WTC11 (cell line): ENCODE measurements at regions of chr10 and their contacts with region 1.

Region 1: DNA sequence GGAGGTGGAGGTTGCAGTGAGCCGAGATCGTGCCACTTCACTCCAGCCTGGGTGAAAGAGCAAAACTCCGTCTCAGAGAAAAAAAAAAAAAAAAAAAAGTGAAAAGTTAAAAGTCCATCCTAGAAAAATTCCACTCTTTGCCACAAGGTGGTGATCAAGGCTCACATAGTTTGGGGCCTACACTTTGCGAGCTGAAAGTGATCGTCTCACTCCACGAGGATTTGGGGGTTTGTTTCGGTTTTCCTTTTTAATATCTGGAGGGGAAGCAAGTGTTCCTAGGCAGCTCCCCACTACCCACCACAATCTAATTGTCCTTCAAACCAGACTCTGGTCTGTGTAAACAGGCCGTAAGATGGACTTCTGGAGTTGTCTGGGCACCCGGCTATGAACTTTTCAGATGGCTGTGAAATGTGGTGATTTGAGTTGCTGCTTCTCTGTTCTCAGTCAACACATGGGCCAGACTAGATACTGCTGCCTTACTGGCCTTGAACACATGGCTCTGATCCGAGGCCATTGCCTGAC is 27.1 kb downstream of the PRLHR start:
- DNase-seq: peak; percentile 17
- ATAC-seq: peak; percentile 34; the same call in 1 of the 2 replicates
- H3K4me3 Mint-ChIP-seq: no peak overlapping the region
- H3K27ac Mint-ChIP-seq: no peak overlapping the region
- H3K4me1 Mint-ChIP-seq: peaks cover 4% of the 10 kb centered on the region
- H3K27me3 Mint-ChIP-seq: peaks cover 3% of the 10 kb centered on the region; the same call in 1 of the 2 replicates
- CTCF ChIP-seq: peak; percentile 79

Region 2: DNA sequence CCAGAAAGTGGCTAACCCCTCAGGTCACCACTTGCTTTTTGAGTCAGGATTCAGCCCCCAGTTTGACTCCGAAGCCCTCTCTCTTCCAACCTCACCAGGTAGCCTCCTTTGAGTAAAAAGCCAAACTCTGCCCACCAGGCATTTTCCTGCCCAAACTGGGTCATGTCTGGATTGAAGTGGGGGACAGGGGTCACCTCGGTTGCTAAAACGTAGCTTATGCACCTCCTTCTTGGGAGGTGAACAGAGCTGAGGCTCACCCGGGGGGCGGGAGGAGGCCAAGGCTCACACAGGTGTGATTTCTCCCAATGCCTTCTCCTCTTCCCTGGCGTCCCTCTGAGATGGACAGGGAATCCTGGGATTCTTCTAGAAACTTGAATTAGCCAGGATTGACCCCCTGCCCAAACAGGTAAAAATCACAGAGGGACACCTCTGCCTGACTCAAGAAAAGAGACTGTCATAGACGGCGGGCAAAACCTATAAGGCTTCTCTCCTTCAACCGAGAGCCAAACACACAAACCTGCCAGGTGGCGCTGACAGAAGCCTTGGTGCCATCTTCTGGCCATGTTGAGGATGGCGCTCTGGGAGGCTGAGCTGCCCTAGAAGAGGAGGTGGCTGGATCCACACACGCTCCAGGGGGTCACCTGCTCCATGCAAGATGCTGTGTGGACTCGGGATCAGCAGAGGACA is 24.5 kb before region 1 on chr10:
- CTCF ChIA-PET with region 1: interaction called, 18 read pairs
- POLR2A ChIA-PET with region 1: no interaction called
- DNase-seq: peak; percentile 81
- ATAC-seq: peak; percentile 99
- H3K4me3 Mint-ChIP-seq: no peak overlapping the region
- H3K27ac Mint-ChIP-seq: no peak overlapping the region
- H3K4me1 Mint-ChIP-seq: no peaks in the 10 kb centered on the region
- H3K27me3 Mint-ChIP-seq: no peaks in the 10 kb centered on the region; the same call in 1 of the 2 replicates
- CTCF ChIP-seq: peak; percentile 24; the same call in 1 of the 2 replicates

Region 3: DNA sequence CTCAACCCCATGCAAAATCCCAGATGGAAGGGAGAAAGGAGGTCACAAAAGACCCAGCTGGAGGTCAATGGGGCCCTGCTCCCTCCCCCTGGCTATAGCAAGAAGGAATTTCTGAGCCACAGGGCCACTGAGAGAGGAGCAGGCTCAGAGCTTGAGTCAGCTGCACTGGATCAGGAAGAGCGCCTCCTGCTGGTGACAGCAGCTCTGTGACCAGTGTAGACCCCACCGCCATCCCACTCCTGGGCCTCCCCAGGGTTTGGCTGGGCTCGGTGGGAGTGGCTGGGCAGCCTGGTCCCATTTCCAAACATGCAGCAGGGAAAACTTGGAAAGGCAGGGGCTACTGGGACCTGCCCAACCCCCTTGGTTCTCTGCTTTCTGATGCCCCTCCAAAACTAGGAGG is 58.6 kb after region 1 on chr10:
- CTCF ChIA-PET with region 1: interaction called, 18 read pairs
- POLR2A ChIA-PET with region 1: no interaction called
- DNase-seq: peak; percentile 40
- ATAC-seq: peak; percentile 93
- H3K4me3 Mint-ChIP-seq: no peak overlapping the region
- H3K27ac Mint-ChIP-seq: no peak overlapping the region
- H3K4me1 Mint-ChIP-seq: peaks cover 25% of the 10 kb centered on the region
- H3K27me3 Mint-ChIP-seq: peaks cover 12% of the 10 kb centered on the region
- CTCF ChIP-seq: peak; percentile 57; the same call in 1 of the 2 replicates

Region 4: GRCh38 chr10:118669020-118669791 is 100.8 kb after region 1 on chr10:
- CTCF ChIA-PET with region 1: interaction called, 23 read pairs
- POLR2A ChIA-PET with region 1: no interaction called
- DNase-seq: no peak
- ATAC-seq: no peak
- H3K4me3 Mint-ChIP-seq: no peak overlapping the region
- H3K27ac Mint-ChIP-seq: no peak overlapping the region
- H3K4me1 Mint-ChIP-seq: peaks cover 6% of the 10 kb centered on the region; the same call in 1 of the 2 replicates
- H3K27me3 Mint-ChIP-seq: no peaks in the 10 kb centered on the region
- CTCF ChIP-seq: no peak

Region 5: DNA sequence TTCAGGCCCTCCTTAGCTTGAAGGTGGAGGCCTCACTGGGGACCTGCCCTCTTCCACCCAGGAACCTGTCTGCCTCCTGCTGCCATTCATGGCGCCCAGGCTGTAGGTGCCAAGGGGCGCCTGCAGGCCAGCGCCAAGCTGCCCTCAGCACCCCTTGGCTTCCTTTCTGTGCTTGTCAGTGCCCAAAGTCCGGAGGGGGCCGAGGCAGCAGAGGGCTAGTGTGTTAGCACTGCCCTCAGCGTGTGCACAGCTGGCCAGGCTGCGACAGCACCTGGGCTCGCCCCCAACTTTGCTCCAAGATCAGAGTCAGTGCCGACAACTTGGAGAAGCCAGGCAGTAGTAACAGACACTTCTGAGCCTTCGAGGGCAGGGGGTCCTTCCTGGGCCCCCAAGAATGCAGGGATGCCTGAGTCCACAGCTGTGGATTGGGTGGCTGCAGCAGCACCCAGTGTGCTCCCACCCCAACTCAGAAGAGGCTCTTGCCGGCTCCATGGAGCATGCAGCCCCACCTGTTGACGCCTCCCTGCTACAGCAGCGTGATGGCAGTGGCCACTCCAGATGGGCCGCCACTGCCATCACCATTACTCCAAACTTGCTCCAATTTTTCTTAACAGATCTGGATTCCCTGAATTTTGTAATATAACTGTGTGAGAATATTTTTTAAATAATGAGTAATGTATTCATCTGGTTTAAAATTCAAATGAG is 144.7 kb after region 1 on chr10:
- CTCF ChIA-PET with region 1: interaction called, 10 read pairs
- POLR2A ChIA-PET with region 1: no interaction called
- DNase-seq: peak; percentile 63
- ATAC-seq: peak; percentile 98
- H3K4me3 Mint-ChIP-seq: no peak overlapping the region
- H3K27ac Mint-ChIP-seq: no peak overlapping the region
- H3K4me1 Mint-ChIP-seq: no peaks in the 10 kb centered on the region
- H3K27me3 Mint-ChIP-seq: no peaks in the 10 kb centered on the region
- CTCF ChIP-seq: 0 out of 2 replicates have a peak, but pooled peaks have one; percentile 43

Region 6: DNA sequence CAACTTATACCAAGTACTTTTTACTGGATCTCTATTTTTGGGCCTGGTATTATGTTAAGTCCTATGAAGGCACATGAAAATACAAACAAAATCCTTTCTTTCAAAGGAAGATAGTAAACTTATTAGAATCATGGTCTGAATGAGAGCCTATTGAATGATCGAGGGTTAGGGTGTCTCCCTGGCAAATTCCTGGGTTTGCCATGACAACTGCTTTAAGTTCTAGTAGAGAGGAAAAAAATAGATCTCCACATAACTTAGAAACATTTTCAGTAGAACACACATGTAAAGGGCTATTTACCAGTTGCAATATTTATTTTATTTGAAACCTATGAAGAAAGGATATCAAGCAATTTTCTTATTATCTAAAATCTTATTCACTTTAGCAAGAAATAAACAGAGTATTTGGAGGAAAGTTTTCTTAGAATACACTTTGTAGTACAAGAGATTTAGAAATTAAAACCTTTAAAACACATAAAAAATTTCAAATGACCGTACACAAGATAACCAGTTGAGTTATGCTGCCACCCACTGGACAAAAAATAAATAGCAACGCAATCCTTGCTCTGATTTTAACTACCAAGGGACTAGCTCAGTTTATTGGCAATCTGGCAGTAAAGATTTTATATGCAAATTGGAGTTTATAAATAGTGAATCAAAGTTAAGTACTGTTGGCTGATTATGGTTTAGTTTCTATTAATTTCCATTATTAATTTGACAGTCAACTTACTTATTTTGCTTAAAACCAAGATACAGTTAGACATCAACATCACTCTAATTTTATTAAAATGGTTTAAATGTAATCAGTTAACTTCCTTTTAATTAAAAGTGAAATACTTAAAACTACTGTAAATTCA is 152.5 kb after region 1 on chr10:
- CTCF ChIA-PET with region 1: interaction called, 17 read pairs
- POLR2A ChIA-PET with region 1: no interaction called
- DNase-seq: peak; percentile 47
- ATAC-seq: peak; percentile 32; the same call in 1 of the 2 replicates
- H3K4me3 Mint-ChIP-seq: no peak overlapping the region
- H3K27ac Mint-ChIP-seq: no peak overlapping the region
- H3K4me1 Mint-ChIP-seq: no peaks in the 10 kb centered on the region
- H3K27me3 Mint-ChIP-seq: no peaks in the 10 kb centered on the region
- CTCF ChIP-seq: peak; percentile 71